GM23248 (cell line): ENCODE measurements at regions of chr9 and their contacts with region 1.

Region 1: DNA sequence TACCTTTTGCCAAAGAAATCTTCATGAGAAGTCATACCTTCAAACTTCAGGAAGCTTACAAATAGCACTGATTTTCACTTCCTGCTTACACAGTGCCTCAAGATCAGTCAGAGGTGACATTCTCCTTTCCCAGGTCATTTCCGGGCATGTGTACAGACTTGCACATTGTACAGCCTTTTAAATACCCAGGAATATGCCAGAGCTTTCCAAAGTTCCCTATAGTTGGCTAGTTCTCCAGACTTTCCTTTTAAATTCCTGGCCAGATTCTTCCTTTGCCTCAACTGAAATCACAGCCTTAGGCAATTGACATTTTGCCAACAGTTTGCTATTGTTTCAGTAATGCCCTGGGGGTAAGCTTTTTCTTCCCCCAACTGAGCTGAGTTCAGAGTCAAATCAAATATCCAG is 47.2 kb downstream of the RFX3 start:
- DNase-seq: peak; percentile 7
- H3K4me3 ChIP-seq: no peak overlapping the region
- H3K27ac ChIP-seq: no peak overlapping the region
- H3K4me1 ChIP-seq: no peaks in the 10 kb centered on the region; the same call in 1 of the 2 replicates
- H3K27me3 ChIP-seq: no peaks in the 10 kb centered on the region

Region 2: GRCh38 chr9:2403701-2404100 is 1074.8 kb before region 1 on chr9:
- in situ Hi-C with region 1: no loop called
- DNase-seq: no peak
- H3K4me3 ChIP-seq: no peak overlapping the region
- H3K27ac ChIP-seq: no peak overlapping the region
- H3K4me1 ChIP-seq: no peaks in the 10 kb centered on the region
- H3K27me3 ChIP-seq: no peaks in the 10 kb centered on the region; the same call in 1 of the 2 replicates

Region 3: DNA sequence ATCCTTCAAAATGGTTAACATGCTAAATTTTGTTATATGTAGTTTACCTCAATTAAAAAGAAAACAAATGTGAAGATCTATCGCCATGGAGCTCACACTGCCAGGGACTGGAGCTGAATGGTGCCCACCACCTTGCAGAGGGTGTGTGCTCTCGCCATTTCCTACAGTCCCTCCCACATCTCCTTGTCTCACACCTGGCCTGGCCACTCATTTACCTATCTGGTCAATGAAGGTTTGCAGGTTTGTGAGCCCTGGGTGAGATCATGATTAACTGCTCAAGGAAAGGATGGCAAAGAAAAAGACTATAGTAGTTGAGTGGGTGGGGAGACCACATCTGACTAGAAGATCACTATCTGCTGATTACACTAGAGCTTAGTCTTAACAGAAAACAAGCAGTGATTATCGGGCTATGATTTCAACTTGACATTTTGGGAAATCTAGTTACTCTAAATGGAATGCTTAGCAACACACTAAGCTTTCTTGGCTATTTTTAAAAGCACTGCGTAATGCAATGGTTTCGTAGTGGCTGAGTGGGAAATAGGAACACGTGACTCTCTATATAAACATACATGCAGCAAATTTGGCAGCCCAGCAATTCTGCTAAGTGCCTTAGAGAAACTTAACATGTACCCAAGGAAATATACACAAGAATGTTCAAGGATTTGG is 661.9 kb before region 1 on chr9:
- in situ Hi-C with region 1: no loop called
- DNase-seq: peak; percentile 86
- H3K4me3 ChIP-seq: 0 out of 2 replicates have a peak overlapping the region, but pooled peaks have one; percentile 37
- H3K27ac ChIP-seq: peak overlapping the region; percentile 88
- H3K4me1 ChIP-seq: peaks cover 40% of the 10 kb centered on the region
- H3K27me3 ChIP-seq: no peaks in the 10 kb centered on the region

Region 4: GRCh38 chr9:3578786-3579185 is 100.2 kb after region 1 on chr9:
- in situ Hi-C with region 1: loop called (anchors 25 kb)
- DNase-seq: peak; percentile 93
- H3K4me3 ChIP-seq: no peak overlapping the region
- H3K27ac ChIP-seq: peak overlapping the region; percentile 32
- H3K4me1 ChIP-seq: peaks cover 13% of the 10 kb centered on the region
- H3K27me3 ChIP-seq: no peaks in the 10 kb centered on the region

Region 5: DNA sequence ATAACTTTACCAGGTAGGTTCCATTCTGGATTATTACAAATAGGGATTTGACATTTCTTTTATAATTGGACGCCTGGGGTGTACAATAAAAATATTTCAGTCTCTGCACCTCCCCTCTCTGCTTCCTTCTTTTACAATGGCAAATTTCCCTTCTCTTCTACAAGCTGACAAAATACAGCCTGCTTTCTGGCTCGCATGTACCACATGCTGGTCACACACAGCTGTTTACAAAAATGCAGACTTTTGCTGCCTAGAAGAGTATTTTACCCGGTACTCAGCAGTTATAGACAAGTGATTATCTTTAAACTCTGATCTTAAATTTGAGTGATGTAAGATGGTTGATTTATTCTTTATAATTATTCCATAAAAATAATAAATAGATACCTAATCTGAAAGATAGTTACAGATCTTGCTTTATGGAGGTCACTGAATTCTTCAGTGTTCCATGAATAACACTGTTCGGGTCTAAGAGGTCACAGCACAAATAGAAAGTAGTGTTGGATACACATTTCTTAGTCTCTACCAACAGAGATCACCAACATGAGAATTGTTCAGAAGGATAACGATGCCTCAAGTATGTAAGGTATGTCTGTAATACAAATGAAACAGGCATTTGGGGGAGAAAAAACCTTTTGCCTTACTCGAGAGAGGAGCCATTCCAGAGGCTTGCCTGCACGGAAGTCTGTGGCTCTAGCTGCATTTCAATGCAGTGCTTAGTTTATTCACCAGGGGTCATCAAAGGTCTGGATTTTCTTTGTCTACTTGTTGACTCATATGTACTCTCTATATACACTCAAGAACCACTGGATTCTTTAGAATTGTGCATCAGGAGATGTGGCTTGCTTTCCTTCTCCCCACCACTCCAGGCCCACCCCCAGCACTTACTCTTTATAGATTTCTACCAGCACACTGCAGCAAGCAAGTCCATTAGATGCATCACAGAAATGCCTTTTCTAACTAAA is 253.8 kb after region 1 on chr9:
- in situ Hi-C with region 1: loop called (anchors 10 kb)
- DNase-seq: peak; percentile 88
- H3K4me3 ChIP-seq: peak overlapping the region; percentile 70
- H3K27ac ChIP-seq: peak overlapping the region; percentile 49
- H3K4me1 ChIP-seq: peaks cover 17% of the 10 kb centered on the region; the same call in 1 of the 2 replicates
- H3K27me3 ChIP-seq: no peaks in the 10 kb centered on the region

Region 6: GRCh38 chr9:4353236-4353635 is 874.7 kb after region 1 on chr9:
- in situ Hi-C with region 1: loop called (anchors 10 kb)
- DNase-seq: peak; percentile 51
- H3K4me3 ChIP-seq: no peak overlapping the region
- H3K27ac ChIP-seq: no peak overlapping the region
- H3K4me1 ChIP-seq: 0 out of 2 replicates have a peak, but pooled peaks cover 5% of the 10 kb centered on the region
- H3K27me3 ChIP-seq: no peaks in the 10 kb centered on the region